Activated CD4-positive, alpha-beta T cell treated with anti-CD3 and anti-CD28 coated beads for 36 hours (primary cell): ENCODE measurements at regions of chr2 and their contacts with region 1.

Region 1: DNA sequence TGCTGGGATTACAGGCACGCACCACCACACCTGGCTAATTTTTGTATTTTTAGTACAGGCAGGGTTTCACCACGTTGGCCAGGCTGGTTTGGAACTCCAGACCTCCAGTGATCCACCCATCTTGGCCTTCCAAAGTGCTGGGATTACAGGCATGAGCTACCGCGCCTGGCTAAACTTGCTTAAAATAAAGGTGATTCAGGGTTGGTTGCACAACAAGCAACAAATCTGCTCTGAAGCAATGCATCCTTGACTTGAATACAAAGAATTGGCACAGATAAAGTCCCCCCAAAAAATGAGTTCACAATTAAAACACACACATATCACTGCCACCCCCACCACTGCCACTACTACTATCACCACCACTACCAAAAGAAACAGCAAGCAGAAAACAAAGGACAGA is 34.9 kb downstream of the CCDC88A start:
- DNase-seq: no peak
- ATAC-seq: no peak
- H3K4me3 Mint-ChIP-seq: no peak overlapping the region
- H3K27ac Mint-ChIP-seq: no peak overlapping the region
- H3K4me1 Mint-ChIP-seq: no peaks in the 10 kb centered on the region
- H3K27me3 Mint-ChIP-seq: no peaks in the 10 kb centered on the region

Region 2: DNA sequence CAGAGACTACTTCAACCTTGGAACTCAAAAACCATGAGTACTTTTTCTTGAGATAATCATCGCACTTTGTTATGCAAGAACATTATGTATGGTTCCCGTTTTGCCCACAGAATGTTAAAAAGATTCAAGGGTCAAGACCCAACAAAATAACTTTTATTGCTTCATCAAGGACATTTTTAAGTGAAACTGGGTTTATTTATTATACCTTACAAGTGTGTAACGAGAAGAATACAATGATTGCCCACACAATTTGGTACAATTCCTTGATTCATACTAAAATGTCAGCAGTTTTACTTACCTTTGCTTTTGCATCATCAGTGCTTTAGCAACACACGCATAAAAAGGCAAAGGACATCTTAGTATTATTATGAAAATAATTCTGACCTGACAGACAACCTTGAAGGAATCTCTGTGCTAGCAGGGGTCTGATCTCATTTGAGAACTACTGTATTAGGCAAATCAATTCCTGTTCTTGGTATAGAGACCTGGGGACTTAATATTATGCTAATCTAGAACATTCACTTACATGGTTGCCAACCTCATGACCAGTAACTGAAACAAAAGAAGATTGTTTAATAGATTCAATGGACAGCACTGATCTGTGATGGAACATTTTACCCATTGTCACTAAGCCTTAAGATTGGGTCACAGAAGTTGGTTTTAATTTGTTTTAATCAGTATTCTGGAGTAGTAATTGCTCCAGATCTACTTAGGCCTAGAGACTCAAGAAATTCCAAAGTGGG is 18.6 kb after region 1 on chr2:
- CTCF ChIA-PET with region 1: no interaction called
- POLR2A ChIA-PET with region 1: interaction called, 12 read pairs
- intact Hi-C with region 1: no loop called
- DNase-seq: no peak
- ATAC-seq: no peak
- H3K4me3 Mint-ChIP-seq: no peak overlapping the region
- H3K27ac Mint-ChIP-seq: no peak overlapping the region
- H3K4me1 Mint-ChIP-seq: no peaks in the 10 kb centered on the region
- H3K27me3 Mint-ChIP-seq: no peaks in the 10 kb centered on the region